Common myeloid progenitor, CD34-positive (primary cell): ENCODE measurements at regions of chr17 and their contacts with region 1.

Region 1: GRCh38 chr17:38349097-38349730 is 2.4 kb upstream of the SOCS7 start:
- DNase-seq: peak; percentile 85 to 92 (median 88)
- H3K4me3 ChIP-seq: no peak overlapping the region
- H3K27ac ChIP-seq: no peak overlapping the region
- H3K4me1 ChIP-seq: peaks cover 1 to 25% (median 16%) of the 10 kb centered on the region in 4 experiments
- H3K27me3 ChIP-seq: no peaks in the 10 kb centered on the region

Region 2: DNA sequence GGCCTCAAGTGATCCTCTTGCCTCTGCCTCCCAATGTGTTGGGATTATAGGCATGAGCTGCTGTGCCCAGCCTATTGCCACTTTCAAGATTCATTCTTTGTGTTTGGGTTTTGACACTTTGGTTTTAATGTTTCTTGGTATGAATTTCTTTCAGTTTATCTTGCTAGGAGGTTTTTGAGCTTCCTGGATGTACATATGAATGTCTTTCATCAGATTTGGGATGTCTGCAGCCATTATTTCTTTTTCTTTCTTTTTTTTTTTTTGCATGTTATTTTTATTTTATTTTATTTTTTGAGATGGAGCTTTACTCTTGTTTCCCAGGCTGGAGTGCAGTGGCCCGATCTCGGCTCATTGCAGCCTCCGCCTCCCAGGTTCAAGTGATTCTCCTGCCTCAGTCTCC is 33.7 kb before region 1 on chr17:
- CTCF ChIA-PET with region 1: no interaction called
- POLR2A ChIA-PET with region 1: no interaction called
- DNase-seq: no peak
- H3K4me3 ChIP-seq: no peak overlapping the region
- H3K27ac ChIP-seq: no peak overlapping the region
- H3K4me1 ChIP-seq: no peaks in the 10 kb centered on the region
- H3K27me3 ChIP-seq: no peaks in the 10 kb centered on the region

Region 3: DNA sequence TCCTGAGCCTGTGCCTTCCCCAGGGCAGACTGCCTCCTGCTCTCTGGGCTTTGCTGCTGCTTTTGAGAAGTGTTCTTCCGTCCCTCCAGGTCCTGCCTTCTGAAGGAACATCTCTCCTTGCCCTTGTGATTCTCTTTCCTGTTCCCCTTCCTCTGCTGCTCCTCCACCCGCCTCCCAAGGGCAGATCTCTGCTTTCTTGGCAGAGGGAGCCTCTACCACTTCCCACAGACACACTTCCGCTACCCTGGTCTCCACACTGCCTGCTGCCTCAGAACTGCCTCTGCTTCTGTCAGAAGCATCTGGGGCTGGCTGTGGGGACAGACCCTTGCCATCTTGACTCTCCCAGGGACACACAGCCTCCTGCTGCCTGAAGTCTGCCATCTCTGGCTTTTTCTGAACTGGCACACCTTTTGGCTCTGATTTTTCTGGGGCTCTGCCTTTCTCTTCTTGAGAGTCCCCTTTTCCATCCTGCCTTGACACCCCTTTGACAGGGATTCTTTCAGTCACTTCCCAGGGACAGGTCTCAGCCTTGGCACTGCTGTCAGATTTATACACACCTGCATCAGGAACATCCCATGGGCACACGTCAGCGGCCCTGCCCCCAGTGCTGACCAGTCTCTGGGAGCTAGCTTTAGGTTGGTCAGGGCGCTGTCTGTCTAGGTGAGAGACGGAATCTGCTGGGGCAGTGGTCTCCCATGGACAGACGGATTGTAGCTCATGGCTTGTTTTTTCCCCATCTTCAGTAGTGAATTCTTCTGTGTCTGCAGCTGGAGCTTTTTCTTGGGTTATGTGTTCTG is 22.0 kb before region 1 on chr17:
- CTCF ChIA-PET with region 1: interaction called, 30 read pairs
- POLR2A ChIA-PET with region 1: no interaction called
- DNase-seq: peak; percentile 50 to 76 (median 74)
- H3K4me3 ChIP-seq: peak overlapping the region in 1 of 7 experiments; percentile 23
- H3K27ac ChIP-seq: no peak overlapping the region
- H3K4me1 ChIP-seq: peaks cover 0 to 30% (median 24%) of the 10 kb centered on the region in 4 experiments
- H3K27me3 ChIP-seq: no peaks in the 10 kb centered on the region

Region 4: DNA sequence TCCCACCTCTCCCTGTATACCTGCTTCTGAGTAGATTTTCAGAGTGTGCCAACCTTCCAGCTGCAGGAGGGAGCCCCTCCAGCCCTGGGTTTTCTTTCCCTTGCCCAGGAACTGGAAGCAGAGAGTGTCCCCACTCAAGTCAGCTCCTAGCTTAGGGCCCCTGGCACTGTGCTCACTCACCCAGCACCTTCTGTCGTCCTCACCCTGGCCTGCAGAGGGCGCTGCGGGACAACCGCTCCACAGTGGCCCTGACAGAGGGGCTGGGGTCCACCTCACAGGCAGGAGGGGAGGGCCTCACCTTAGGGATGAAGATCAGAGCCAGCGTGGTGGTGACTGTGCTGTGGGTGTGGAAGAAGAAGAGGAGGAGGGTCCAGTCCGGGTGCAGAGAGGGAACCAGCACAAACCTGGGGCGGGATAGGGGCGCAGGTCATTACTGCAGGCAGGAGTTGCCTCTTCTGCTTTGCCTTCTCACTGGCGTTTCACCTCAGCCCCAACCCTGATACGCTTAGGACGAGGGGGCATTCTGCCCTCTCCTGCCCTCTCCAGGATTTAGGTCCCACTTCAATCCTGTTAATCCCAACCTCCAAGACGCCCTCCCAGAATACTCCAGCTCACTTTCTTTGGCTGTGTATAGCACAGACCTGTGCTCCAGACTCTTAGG is 15.4 kb before region 1 on chr17:
- CTCF ChIA-PET with region 1: interaction called, 30 read pairs
- POLR2A ChIA-PET with region 1: no interaction called
- DNase-seq: peak in 2 of 3 donors; percentile 36 to 53
- H3K4me3 ChIP-seq: no peak overlapping the region
- H3K27ac ChIP-seq: no peak overlapping the region
- H3K4me1 ChIP-seq: no peaks in the 10 kb centered on the region
- H3K27me3 ChIP-seq: no peaks in the 10 kb centered on the region

Region 5: DNA sequence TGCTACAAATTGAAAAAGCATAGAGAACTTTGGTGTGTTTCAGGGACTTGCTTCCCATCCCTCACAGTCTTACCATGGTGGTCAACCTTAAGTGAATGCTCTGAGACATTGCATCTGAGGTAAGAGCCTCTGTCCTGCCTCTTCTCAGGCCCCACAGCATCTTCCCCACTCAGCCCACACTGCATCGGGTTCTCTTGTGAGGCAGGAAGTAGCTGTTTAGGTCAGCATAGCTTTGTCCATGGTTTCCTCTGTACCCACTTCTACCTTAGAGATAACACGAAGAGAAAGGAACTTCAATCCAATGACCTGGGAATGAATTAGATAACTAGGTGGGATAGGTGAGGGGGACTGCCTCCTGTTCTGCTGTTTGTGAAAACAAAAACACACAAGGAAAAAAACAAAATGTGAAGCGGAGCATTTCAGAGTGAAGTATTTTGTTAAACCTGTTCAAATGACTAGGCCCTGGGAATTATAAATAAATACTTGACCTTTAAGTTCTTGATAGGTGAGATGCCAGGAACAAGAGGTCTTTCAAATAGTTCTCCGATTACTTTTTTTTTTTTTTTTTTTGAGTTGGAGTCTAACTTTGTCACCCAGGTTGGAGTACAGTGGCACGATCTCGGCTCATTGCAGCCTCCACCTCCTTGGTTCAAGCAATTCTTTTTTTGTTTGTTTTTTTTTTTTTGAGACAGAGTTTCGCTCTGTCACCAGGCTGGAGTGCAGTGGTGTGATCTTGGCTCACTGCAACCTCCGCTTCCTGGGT is 20.1 kb after region 1 on chr17:
- CTCF ChIA-PET with region 1: interaction called, 14 read pairs
- POLR2A ChIA-PET with region 1: no interaction called
- DNase-seq: no peak
- H3K4me3 ChIP-seq: no peak overlapping the region
- H3K27ac ChIP-seq: no peak overlapping the region
- H3K4me1 ChIP-seq: no peaks in the 10 kb centered on the region
- H3K27me3 ChIP-seq: no peaks in the 10 kb centered on the region

Region 6: DNA sequence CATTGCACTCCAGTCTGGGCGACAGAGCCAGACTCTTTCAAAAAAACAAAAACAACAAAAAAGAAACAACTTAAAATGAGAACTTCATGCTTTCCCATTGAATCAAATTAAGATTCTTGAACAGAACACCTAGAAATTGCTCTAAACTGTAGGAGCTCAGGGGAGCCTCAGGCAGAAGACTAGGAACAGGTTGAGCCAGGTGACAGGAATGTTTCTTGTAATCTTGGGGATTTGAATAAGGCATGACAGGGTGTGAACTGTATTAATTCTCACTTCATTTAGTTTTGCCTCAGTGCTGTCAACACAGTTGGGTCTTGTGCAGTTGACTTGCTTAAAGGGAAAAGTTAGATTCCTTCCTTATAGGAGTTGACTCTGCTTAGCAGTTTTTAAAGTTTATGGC is 30.2 kb after region 1 on chr17:
- CTCF ChIA-PET with region 1: interaction called, 20 read pairs
- POLR2A ChIA-PET with region 1: interaction called, 3 read pairs
- DNase-seq: no peak
- H3K4me3 ChIP-seq: no peak overlapping the region
- H3K27ac ChIP-seq: no peak overlapping the region
- H3K4me1 ChIP-seq: peaks cover 0 to 4% (median under 1%) of the 10 kb centered on the region in 4 experiments
- H3K27me3 ChIP-seq: no peaks in the 10 kb centered on the region

Region 7: GRCh38 chr17:38403491-38403890 is 54.3 kb after region 1 on chr17:
- CTCF ChIA-PET with region 1: interaction called, 132 read pairs
- POLR2A ChIA-PET with region 1: no interaction called
- DNase-seq: peak in 2 of 3 donors; percentile 31 to 44
- H3K4me3 ChIP-seq: no peak overlapping the region
- H3K27ac ChIP-seq: no peak overlapping the region
- H3K4me1 ChIP-seq: no peaks in the 10 kb centered on the region
- H3K27me3 ChIP-seq: no peaks in the 10 kb centered on the region

Region 8: DNA sequence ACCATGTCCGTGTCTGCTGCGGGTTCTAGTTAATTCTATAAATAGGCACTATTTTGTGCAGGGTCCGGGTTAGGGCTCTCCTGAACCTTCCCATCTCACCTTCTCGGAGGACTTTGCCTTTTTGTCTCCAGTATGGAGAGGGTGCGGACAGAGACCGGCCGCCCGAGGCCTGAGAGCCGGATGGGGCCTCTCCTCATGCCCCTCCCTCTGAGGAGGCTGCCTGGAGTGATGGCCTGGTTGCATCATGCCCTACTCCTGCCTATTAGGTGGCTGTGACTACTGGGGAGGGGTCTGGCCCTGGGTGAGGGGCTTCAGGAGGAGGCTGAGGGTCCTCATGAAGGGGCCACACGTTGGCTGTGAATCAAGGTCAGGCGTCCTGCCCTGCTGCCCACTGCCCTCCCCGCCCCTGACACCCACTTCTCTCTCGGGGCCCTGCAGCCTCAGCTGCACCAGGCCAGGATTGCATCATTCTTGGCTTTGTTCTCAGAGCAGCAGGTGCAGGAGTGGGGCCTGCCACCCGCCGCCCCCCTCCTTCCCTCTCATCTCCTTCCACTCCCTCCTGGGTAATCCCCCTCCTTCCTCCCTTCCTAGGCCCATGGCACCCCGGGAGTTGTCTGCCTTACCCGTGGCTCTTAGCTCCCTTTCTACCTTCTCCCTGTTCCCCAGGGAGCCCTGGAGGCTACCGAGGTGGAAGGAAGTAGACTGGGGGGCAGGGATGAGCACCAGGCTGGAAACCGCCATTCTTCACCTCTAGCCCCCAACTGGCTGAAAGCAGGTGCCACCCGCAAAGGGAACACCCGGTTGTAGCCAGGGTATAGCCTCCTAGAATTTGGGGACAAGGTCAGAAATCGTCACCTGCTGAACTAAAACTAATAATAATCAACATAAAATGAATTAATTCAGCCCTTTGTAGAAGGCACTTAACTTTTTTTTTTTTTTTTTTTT is 66.3 kb after region 1 on chr17:
- CTCF ChIA-PET with region 1: interaction called, 132 read pairs
- POLR2A ChIA-PET with region 1: interaction called, 7 read pairs
- DNase-seq: peak; percentile 44 to 63 (median 55)
- H3K4me3 ChIP-seq: peak overlapping the region in 1 of 7 experiments; percentile 1
- H3K27ac ChIP-seq: no peak overlapping the region
- H3K4me1 ChIP-seq: peaks cover 0 to 31% (median 23%) of the 10 kb centered on the region in 4 experiments
- H3K27me3 ChIP-seq: peaks cover 0 to 35% (median 20%) of the 10 kb centered on the region in 5 experiments

Region 9: DNA sequence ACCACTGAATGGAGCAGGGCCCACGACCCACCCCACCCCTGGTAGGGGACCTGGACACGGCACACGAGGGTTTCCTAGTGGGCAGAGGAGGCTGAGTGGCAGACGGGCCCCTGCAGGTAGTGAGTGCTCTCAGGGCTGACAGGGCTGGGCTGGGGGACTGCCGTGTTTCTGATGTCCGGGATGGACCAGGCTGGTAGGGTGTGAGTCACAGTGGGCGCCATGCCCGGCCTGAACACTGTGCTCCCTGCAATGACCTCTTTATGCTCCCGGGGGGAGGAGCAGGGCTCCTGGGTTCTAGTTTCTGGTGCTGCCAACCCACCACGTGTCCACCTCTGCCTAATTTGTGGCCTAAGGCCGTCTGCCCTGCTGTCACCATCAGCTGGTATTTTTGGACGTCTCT is 105.3 kb after region 1 on chr17:
- CTCF ChIA-PET with region 1: no interaction called
- POLR2A ChIA-PET with region 1: no interaction called
- DNase-seq: no peak
- H3K4me3 ChIP-seq: peak overlapping the region in 1 of 7 experiments; percentile 44
- H3K27ac ChIP-seq: no peak overlapping the region
- H3K4me1 ChIP-seq: peaks cover 0 to 52% (median 44%) of the 10 kb centered on the region in 4 experiments
- H3K27me3 ChIP-seq: peaks cover 0 to 19% (median 5%) of the 10 kb centered on the region in 5 experiments